ENCODE measurements at regions of chr22 and their contacts with region 1.

Region 1: DNA sequence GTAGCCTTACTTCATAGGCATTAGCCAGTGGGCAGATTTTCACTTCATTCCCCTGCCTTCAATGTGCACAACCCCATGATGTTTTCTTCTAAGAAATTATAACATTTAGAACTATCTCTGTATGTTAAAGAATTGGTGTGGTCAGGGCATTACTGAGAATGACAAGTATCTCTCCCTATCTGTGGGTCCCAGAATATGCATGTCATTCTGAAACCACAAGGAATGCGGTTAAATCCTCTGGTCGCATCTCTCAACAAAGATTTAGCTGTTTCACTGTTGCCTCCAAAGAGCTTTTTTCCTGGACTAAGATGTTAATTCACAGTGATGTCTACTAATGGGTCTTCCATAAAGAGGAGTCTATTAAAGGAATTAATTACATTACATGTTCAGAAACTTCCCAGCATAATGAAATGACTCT is 62.7 kb downstream of the LIF start:
- DNase-seq: peak; percentile 29 to 63 (median 36)
- ATAC-seq: peak; percentile 80
- H3K4me3 ChIP-seq: no peak overlapping the region
- H3K27ac ChIP-seq: no peak overlapping the region
- H3K4me1 ChIP-seq: peaks cover 0 to 14% of the 10 kb centered on the region in 2 experiments; a peak in 4 of 5 replicates
- H3K27me3 ChIP-seq: no peaks in the 10 kb centered on the region; a peak in 1 of 5 replicates
- CTCF ChIP-seq: no peak
- EP300 ChIP-seq: peak; percentile 70; the same call in 1 of the 2 replicates
- POLR2A ChIP-seq: no peak
- RAD21 ChIP-seq: peak in 1 of 2 experiments; percentile 20; a peak in 1 of 4 replicates

Region 2: GRCh38 chr22:30094804-30095203 is 89.1 kb before region 1 on chr22:
- CTCF ChIA-PET with region 1: no interaction called
- POLR2A ChIA-PET with region 1: no interaction called
- in situ Hi-C with region 1: no loop called
- intact Hi-C with region 1: no loop called
- DNase-seq: no peak
- ATAC-seq: no peak
- H3K4me3 ChIP-seq: no peak overlapping the region
- H3K27ac ChIP-seq: no peak overlapping the region
- H3K4me1 ChIP-seq: no peaks in the 10 kb centered on the region; a peak in 1 of 5 replicates
- H3K27me3 ChIP-seq: no peaks in the 10 kb centered on the region
- CTCF ChIP-seq: no peak
- EP300 ChIP-seq: no peak
- POLR2A ChIP-seq: no peak
- RAD21 ChIP-seq: no peak

Region 3: DNA sequence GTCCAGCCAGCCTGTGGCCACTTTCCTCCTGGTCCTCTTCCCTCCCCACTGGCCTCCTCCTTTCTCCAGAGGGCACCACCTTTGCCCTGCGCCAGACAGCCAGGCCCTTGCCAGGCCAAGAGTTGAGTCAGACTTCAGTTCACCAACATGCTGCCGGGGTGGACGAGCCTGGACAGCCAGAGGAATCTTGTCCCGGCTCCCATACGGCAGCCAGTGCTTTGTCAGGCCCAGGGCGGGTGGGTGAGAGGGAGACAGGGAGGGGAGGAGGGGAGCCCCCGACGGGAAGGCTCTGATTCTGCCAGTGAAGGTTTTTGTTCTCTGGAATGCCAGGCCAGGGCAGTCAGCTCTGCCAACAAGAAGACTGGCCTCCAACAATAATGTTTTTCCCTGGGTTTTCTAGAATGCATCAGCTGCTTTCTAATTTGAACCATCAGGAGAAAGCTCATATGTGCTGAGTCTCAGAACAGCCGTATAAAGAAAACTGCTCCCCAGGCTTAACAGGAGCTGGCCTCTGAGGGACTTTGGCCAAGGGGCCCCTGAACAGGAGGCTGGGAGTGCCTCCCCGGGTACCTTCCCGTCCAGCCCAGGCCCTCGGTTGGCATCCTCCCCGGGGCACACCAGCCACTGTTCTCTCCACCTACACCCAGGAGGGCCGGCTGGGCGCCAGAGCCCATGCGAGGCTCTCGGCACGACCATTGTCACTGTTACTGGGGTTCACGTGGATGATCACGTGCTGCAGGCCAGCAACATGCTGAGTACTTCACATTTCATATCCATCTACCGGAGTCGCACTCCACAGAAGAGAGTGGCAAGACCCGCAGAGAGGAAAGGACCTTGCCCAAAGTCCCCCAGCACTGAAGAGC is 34.1 kb after region 1 on chr22:
- CTCF ChIA-PET with region 1: no interaction called
- POLR2A ChIA-PET with region 1: no interaction called
- in situ Hi-C with region 1: no loop called
- intact Hi-C with region 1: loop called (anchors 5 kb)
- DNase-seq: no peak
- ATAC-seq: no peak
- H3K4me3 ChIP-seq: no peak overlapping the region
- H3K27ac ChIP-seq: no peak overlapping the region
- H3K4me1 ChIP-seq: peaks cover 23 to 40% of the 10 kb centered on the region in 2 experiments; a peak in 4 of 5 replicates
- H3K27me3 ChIP-seq: peaks cover 0 to 23% of the 10 kb centered on the region in 2 experiments; a peak in 2 of 5 replicates
- CTCF ChIP-seq: no peak
- EP300 ChIP-seq: no peak
- POLR2A ChIP-seq: no peak
- RAD21 ChIP-seq: no peak